Body of pancreas (tissue), 4 donors: ENCODE measurements at regions of chr3 and their contacts with region 1.

Region 1: GRCh38 chr3:58640700-58641372 is 25.7 kb downstream of the FAM3D start:
- DNase-seq: peak; percentile 76 to 82 (median 78)
- ATAC-seq: peak; percentile 91
- H3K4me3 ChIP-seq: no peak overlapping the region
- H3K27ac ChIP-seq: no peak overlapping the region
- H3K4me1 ChIP-seq: peaks cover 8% of the 10 kb centered on the region
- H3K27me3 ChIP-seq: no peaks in the 10 kb centered on the region
- CTCF ChIP-seq: peak; percentile 73 to 90 (median 83)
- POLR2A ChIP-seq: no peak

Region 2: GRCh38 chr3:57974796-57975388 is 665.9 kb before region 1 on chr3:
- intact Hi-C with region 1: no loop called
- DNase-seq: peak in 1 of 4 donors; percentile 25
- ATAC-seq: peak; percentile 27
- H3K4me3 ChIP-seq: no peak overlapping the region
- H3K27ac ChIP-seq: no peak overlapping the region
- H3K4me1 ChIP-seq: no peaks in the 10 kb centered on the region
- H3K27me3 ChIP-seq: no peaks in the 10 kb centered on the region
- CTCF ChIP-seq: no peak
- POLR2A ChIP-seq: no peak

Region 3: DNA sequence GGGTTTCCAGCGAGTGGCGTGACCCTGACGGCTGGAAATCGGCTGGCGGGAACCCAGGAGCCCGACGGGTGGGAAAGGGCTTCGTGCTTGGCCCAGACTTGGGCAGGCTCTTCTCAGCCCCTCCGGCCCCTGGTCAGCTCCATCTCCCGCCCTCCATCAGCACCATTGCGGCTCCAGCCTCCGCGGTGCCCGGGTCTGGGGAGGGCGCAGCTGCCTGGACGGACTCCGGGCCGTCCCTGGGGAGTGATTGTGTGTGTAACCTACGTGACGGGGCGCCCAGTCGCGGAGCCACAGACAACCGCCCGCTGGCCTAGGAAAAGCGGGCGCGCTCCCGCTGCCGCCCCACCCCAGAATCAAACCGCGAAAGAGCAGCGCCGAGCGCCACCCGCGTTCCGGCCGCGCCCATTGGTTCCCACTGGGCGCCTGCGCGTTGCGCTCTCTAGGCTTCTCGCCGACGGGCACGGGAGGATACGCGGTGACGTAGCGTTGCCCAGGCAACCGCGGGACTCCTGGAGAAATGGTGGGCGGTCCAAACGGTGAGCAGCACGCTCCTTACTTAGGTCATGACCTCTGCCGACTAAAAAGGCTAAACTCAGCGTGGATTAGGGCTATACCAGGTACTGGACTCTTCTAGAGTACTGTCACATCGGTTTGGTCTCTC is 409.0 kb after region 1 on chr3 and contains the start of gene CFAP20DC:
- intact Hi-C with region 1: loop called (anchors 5 kb)
- DNase-seq: peak; percentile 92 to 94 (median 94)
- ATAC-seq: peak; percentile 99
- H3K4me3 ChIP-seq: peak within 1 kb of the TSS; percentile 23 to 42
- H3K27ac ChIP-seq: peak within 1 kb of the TSS; percentile 36 to 59 (median 48)
- H3K4me1 ChIP-seq: peaks cover 11% of the 10 kb centered on the region
- H3K27me3 ChIP-seq: no peaks in the 10 kb centered on the region
- CTCF ChIP-seq: no peak
- POLR2A ChIP-seq: peak; percentile 77 to 87 (median 85)
- total RNA-seq, gene CFAP20DC: 0.33 to 1.0 TPM